ENCODE measurements at regions of chr16 and their contacts with region 1.

Region 1: GRCh38 chr16:81261049-81261648 is 22.7 kb downstream of the BCO1 start:
- DNase-seq: peak; percentile 49
- H3K4me3 Mint-ChIP-seq: no peak overlapping the region
- H3K27ac Mint-ChIP-seq: no peak overlapping the region
- H3K4me1 Mint-ChIP-seq: no peaks in the 10 kb centered on the region
- H3K27me3 Mint-ChIP-seq: peaks cover 10% of the 10 kb centered on the region

Region 2: GRCh38 chr16:80938035-80938865 is 322.9 kb before region 1 on chr16:
- CTCF ChIA-PET with region 1: no interaction called
- POLR2A ChIA-PET with region 1: no interaction called
- intact Hi-C with region 1: no loop called
- DNase-seq: no peak
- H3K4me3 Mint-ChIP-seq: no peak overlapping the region
- H3K27ac Mint-ChIP-seq: no peak overlapping the region
- H3K4me1 Mint-ChIP-seq: no peaks in the 10 kb centered on the region
- H3K27me3 Mint-ChIP-seq: peaks cover 25% of the 10 kb centered on the region

Region 3: DNA sequence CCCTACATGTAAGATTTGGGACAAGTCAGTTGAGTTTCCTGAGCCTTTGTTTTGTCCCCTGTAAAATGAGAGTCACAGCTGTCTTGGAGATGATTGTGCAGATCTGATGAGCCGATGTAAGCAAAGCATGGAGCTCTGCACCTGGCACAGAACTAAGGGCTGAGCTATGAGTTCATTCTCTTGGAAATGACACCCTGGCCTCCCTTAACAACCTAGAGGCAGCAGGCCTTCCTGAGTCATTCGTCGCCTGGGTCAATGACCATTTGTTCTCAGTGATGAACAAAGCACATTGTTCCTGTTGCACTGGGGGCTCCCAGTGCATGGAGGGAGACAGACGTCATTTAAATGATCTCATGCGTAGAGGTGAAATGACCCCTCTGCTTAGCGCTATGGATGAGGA is 102.2 kb before region 1 on chr16:
- CTCF ChIA-PET with region 1: no interaction called
- POLR2A ChIA-PET with region 1: no interaction called
- intact Hi-C with region 1: no loop called
- DNase-seq: no peak
- H3K4me3 Mint-ChIP-seq: no peak overlapping the region
- H3K27ac Mint-ChIP-seq: no peak overlapping the region
- H3K4me1 Mint-ChIP-seq: no peaks in the 10 kb centered on the region
- H3K27me3 Mint-ChIP-seq: no peaks in the 10 kb centered on the region

Region 4: GRCh38 chr16:81349996-81350618 is 89.0 kb after region 1 on chr16:
- CTCF ChIA-PET with region 1: interaction called, 3 read pairs
- POLR2A ChIA-PET with region 1: no interaction called
- intact Hi-C with region 1: loop called (anchors 1 kb)
- DNase-seq: no peak
- H3K4me3 Mint-ChIP-seq: no peak overlapping the region
- H3K27ac Mint-ChIP-seq: no peak overlapping the region
- H3K4me1 Mint-ChIP-seq: peaks cover 11% of the 10 kb centered on the region
- H3K27me3 Mint-ChIP-seq: no peaks in the 10 kb centered on the region

Region 5: GRCh38 chr16:81737885-81738786 is 477.0 kb after region 1 on chr16:
- CTCF ChIA-PET with region 1: interaction called, 6 read pairs
- POLR2A ChIA-PET with region 1: no interaction called
- intact Hi-C with region 1: loop called (anchors 2 kb)
- DNase-seq: peak; percentile 93
- H3K4me3 Mint-ChIP-seq: peak overlapping the region; percentile 53
- H3K27ac Mint-ChIP-seq: peak overlapping the region; percentile 7
- H3K4me1 Mint-ChIP-seq: peaks cover 8% of the 10 kb centered on the region
- H3K27me3 Mint-ChIP-seq: no peaks in the 10 kb centered on the region

Measured in activated CD4-positive, alpha-beta memory T cell treated with anti-CD3 and anti-CD28 coated beads for 36 hours (primary cell).